Activated naive CD4-positive, alpha-beta T cell treated with anti-CD3 and anti-CD28 coated beads for 36 hours (primary cell): ENCODE measurements at regions of chr3 and their contacts with region 1.

Region 1: GRCh38 chr3:72818092-72818773 is 30.0 kb downstream of the SHQ1 start:
- DNase-seq: peak; percentile 13
- H3K4me3 Mint-ChIP-seq: no peak overlapping the region
- H3K27ac Mint-ChIP-seq: no peak overlapping the region
- H3K4me1 Mint-ChIP-seq: peaks cover 19% of the 10 kb centered on the region
- H3K27me3 Mint-ChIP-seq: no peaks in the 10 kb centered on the region

Region 2: DNA sequence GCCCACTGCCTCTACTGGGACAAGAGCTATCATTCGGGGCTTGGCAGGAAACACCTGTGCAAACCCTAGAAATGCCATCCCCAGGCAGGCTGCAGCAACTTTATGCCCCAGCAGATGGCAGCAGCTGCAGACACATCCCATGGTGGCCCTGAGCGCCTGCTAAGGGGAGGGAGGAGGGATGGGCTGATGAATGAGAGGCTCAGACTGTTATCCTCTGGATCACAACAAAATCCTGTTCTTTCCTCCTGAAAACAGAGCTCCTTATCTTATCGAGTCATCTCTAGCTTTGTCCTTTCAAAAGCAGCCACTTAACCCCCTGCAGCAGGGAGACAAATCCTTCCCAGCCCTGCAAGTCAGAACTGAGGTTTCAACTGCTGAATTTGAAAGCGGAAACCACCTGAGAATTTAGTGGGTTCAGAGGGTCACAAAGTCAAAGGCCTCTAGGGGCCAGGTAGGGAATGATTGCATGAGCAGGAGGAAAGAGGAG is 942.7 kb before region 1 on chr3:
- CTCF ChIA-PET with region 1: interaction called, 13 read pairs
- intact Hi-C with region 1: loop called (anchors 1 kb)
- DNase-seq: peak; percentile 92
- H3K4me3 Mint-ChIP-seq: no peak overlapping the region
- H3K27ac Mint-ChIP-seq: peak overlapping the region; percentile 76
- H3K4me1 Mint-ChIP-seq: peaks cover 35% of the 10 kb centered on the region
- H3K27me3 Mint-ChIP-seq: no peaks in the 10 kb centered on the region

Region 3: GRCh38 chr3:72134989-72135451 is 683.2 kb before region 1 on chr3:
- CTCF ChIA-PET with region 1: interaction called, 6 read pairs
- intact Hi-C with region 1: loop called (anchors 1 kb)
- DNase-seq: peak; percentile 18
- H3K4me3 Mint-ChIP-seq: peak overlapping the region; percentile 49
- H3K27ac Mint-ChIP-seq: peak overlapping the region; percentile 78
- H3K4me1 Mint-ChIP-seq: peaks cover 47% of the 10 kb centered on the region
- H3K27me3 Mint-ChIP-seq: peaks cover 4% of the 10 kb centered on the region

Region 4: GRCh38 chr3:72375237-72376076 is 442.8 kb before region 1 on chr3:
- CTCF ChIA-PET with region 1: interaction called, 10 read pairs
- intact Hi-C with region 1: loop called (anchors 1 kb)
- DNase-seq: peak; percentile 70
- H3K4me3 Mint-ChIP-seq: peak overlapping the region; percentile 20
- H3K27ac Mint-ChIP-seq: peak overlapping the region; percentile 82
- H3K4me1 Mint-ChIP-seq: peaks cover 62% of the 10 kb centered on the region
- H3K27me3 Mint-ChIP-seq: no peaks in the 10 kb centered on the region

Region 5: GRCh38 chr3:72523429-72524151 is 294.6 kb before region 1 on chr3:
- CTCF ChIA-PET with region 1: no interaction called
- intact Hi-C with region 1: loop called (anchors 1 kb)
- DNase-seq: peak; percentile 30
- H3K4me3 Mint-ChIP-seq: no peak overlapping the region
- H3K27ac Mint-ChIP-seq: no peak overlapping the region
- H3K4me1 Mint-ChIP-seq: peaks cover 44% of the 10 kb centered on the region
- H3K27me3 Mint-ChIP-seq: peaks cover 2% of the 10 kb centered on the region

Region 6: DNA sequence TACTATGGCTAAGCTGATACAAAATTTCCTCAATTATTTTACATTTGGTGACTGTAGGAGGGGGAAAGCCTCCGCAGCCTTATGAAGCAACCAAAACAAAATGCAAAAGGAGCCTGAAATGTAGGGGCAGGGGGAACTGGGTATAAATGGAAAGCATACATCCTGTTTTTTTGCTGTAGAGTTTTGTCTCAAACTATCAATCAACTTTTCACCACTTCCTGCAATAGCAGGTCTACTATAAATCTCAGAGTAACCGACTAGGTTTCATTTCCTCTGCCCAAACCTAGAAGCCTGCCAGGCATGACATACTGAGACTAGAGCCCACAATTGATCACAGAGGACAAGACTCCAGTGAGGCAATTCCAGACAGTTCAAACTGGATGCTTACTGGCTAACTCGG is 61.3 kb before region 1 on chr3:
- CTCF ChIA-PET with region 1: interaction called, 5 read pairs
- intact Hi-C with region 1: loop called (anchors 1 kb)
- DNase-seq: peak; percentile 73
- H3K4me3 Mint-ChIP-seq: peak overlapping the region; percentile 17
- H3K27ac Mint-ChIP-seq: peak overlapping the region; percentile 83
- H3K4me1 Mint-ChIP-seq: peaks cover 74% of the 10 kb centered on the region
- H3K27me3 Mint-ChIP-seq: no peaks in the 10 kb centered on the region